Activated naive CD4-positive, alpha-beta T cell treated with anti-CD3 and anti-CD28 coated beads for 36 hours (primary cell): ENCODE measurements at regions of chr13 and their contacts with region 1.

Region 1: GRCh38 chr13:51614350-51614786 is 30.1 kb downstream of the WDFY2 start:
- DNase-seq: peak; percentile 78
- H3K4me3 Mint-ChIP-seq: peak overlapping the region; percentile 74
- H3K27ac Mint-ChIP-seq: peak overlapping the region; percentile 96
- H3K4me1 Mint-ChIP-seq: peaks cover 18% of the 10 kb centered on the region
- H3K27me3 Mint-ChIP-seq: no peaks in the 10 kb centered on the region

Region 2: DNA sequence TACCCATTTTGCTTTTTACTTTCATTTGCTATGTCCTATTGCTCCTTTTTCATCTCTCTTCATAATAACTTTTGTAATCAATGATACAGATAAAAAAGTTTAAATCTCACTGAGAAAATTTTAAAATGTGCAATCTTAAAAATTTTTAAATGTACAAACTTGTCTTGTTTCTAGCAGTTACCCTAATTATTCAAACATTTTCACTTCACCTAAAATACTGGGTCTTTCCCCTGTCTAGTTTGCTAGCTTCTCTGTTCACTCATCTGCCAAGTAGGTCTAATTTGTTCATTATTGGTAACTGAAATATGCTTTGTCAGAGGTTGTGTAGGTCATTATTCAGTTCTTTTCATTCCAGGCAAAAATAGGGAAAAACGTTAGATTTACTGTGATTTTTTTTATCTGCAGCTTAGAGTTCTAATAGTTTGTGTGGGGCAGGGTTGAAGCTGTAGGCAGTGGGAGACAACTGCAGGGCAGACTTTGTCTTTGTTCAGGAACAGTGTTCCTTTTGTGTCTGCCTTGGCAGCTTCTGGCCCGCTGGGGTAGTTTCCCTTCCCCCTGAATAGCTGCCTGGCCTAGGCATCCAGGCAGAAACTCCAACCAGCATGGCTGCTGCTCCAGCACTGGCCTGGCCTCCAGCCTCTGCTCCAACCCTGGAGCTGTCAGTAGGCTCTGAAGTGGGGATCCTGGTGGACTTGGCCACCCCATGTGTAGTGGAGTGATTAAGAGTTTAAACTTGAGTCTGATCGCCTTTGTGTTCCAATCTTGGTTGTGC is 18.4 kb after region 1 on chr13:
- CTCF ChIA-PET with region 1: no interaction called
- intact Hi-C with region 1: loop called (anchors 2 kb)
- DNase-seq: no peak
- H3K4me3 Mint-ChIP-seq: no peak overlapping the region
- H3K27ac Mint-ChIP-seq: no peak overlapping the region
- H3K4me1 Mint-ChIP-seq: peaks cover 57% of the 10 kb centered on the region
- H3K27me3 Mint-ChIP-seq: no peaks in the 10 kb centered on the region

Region 3: GRCh38 chr13:51645154-51645650 is 30.8 kb after region 1 on chr13:
- CTCF ChIA-PET with region 1: interaction called, 5 read pairs
- intact Hi-C with region 1: loop called (anchors 1 kb)
- DNase-seq: peak; percentile 22
- H3K4me3 Mint-ChIP-seq: peak overlapping the region; percentile 30
- H3K27ac Mint-ChIP-seq: peak overlapping the region; percentile 39
- H3K4me1 Mint-ChIP-seq: peaks cover 40% of the 10 kb centered on the region
- H3K27me3 Mint-ChIP-seq: no peaks in the 10 kb centered on the region

Region 4: DNA sequence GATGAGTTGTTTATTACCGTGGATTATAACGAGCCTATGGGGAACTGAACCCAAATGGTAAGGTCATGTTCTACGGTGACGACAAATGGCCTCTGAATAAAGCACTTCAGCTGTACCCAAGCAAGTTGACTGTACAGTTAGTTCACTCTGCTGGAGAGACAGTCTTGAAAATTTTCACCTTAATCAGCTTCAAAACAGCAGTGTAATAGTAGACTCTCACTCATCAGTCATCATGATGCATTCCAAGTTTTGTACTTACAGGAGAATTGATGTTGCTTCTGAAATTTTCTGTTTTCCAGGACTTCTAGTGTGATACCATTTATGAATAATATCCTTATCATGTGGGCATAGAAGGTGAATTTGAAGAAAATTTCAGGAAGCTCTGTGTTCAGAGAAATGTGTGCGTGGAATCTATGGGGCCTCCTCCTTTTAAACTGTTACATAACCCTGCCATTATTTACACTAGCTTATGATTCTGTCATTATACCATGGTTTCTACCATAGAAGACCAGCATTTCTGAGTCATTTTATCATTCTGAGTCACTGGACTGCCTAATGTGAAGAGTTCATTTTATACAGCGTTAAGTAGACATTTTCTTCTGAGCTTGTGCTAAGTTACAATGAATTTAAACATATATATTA is 66.8 kb after region 1 on chr13:
- CTCF ChIA-PET with region 1: no interaction called
- intact Hi-C with region 1: loop called (anchors 2 kb)
- DNase-seq: no peak
- H3K4me3 Mint-ChIP-seq: no peak overlapping the region
- H3K27ac Mint-ChIP-seq: no peak overlapping the region
- H3K4me1 Mint-ChIP-seq: peaks cover 13% of the 10 kb centered on the region
- H3K27me3 Mint-ChIP-seq: no peaks in the 10 kb centered on the region

Region 5: DNA sequence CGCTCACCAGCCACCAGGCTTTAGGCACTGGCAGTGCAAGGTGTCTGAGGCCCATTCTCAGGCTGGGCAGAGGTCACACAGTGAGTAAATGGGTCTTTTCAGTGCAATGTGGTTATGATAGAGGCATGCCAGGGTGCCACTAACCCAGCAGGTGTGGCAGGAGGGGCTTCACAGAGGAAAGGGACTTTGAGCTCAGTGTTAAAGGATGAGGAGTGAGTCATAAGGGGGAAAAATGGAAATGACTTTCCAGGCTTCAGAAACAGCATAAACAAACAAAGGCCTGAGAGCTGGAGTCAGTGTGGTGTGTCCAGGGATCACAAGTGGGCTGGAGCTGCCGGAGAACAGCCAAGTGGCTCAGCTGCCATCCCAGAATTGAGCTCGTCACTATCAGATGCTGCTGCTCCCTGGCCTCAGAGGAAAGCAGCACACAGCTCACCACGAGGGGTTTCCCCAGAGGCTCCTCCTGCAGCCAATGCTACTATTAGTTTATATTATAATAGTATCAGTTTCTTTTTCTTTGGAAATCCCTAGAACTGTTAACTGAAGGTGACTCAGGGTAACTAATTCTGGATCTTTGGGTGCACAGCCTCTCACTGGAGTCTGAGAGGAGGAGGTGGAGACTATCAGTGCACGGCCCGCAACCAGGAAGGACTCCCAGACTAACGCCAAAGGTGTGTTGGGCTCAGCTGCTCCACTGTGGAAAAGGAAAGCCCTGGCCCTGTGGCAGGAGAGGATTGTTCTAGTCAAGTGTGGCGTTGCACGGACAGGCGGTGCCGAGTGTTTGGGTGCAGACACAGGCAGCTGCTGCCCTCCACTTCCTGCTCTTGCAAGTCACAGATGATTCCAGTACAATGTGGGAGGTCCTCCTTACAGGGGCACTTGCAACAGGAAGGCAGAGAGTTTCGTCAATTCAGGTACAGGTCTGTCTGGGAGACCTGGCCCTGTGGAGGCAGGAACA is 150.1 kb after region 1 on chr13:
- CTCF ChIA-PET with region 1: no interaction called
- intact Hi-C with region 1: loop called (anchors 1 kb)
- DNase-seq: peak; percentile 84
- H3K4me3 Mint-ChIP-seq: peak overlapping the region; percentile 73
- H3K27ac Mint-ChIP-seq: peak overlapping the region; percentile 82
- H3K4me1 Mint-ChIP-seq: peaks cover 35% of the 10 kb centered on the region
- H3K27me3 Mint-ChIP-seq: no peaks in the 10 kb centered on the region